ENCODE measurements at regions of chr14 and their contacts with region 1.

Region 1: DNA sequence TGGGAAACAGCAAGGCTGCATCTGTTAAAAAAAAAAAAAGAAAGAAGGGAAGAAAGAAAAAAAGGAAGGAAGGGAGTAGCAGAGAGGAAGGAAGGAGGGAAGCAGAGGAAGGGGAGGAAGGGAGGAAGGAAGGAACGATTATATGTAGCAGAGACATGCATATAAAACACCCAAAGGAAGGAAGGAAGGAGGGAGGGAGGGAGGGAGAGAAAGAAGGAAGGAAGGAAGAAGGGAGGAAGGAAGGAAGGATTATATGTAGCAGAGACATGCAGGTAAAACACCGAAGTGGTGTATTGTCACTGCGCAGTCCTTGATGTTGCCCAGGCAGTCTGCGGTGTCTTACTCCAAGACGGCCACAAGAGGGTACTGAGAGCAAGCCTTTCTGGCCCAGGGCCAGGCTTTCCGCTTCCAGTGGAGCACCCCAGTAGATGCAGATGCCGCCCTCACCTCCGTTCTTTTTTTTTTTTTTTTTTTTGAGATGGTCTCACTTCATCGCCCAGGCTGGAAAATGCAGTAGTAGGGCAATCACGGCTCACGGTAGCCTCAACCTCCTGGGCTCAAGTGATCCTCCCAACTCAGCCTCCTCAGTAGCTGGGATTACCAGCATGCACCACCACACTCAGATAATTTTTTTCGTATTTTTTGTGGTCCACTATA is 5.8 kb upstream of the LBHD2 start:
- ATAC-seq: peak in 7 of 8 experiments; percentile 7 to 62 (median 51)
- H3K4me3 ChIP-seq: no peak overlapping the region
- H3K27ac ChIP-seq: no peak overlapping the region
- H3K4me1 ChIP-seq: peaks cover 0 to 5% of the 10 kb centered on the region in 2 donors

Region 2: DNA sequence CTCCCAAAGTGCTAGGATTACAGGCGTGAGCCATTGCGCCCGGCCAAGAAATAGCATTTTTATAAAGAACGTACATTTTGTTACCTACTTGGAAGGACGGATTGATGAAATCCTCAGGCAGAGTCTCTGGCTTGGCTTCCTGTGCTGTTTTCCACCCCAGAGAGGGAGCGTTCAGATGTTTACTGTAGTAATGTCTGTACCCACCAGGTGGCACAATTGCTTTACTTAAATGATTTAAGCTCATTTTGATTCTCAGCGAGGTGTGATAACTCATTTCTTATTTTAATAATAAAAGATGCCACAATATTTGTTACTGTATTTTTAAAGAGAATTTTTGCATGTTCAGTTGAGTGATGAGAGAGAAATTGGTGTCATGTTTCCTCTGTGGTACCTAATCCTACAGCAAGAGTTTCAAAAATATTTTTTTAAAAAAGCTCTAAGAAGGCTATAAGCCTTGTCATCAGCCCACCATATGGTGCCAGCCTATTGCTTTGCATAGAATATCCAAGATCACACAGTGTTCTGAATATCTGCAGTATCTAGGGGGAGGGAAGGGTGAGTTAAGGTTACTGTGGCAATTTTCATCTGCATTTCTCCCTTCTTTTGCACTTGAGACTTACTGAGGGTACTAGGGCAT is 383.6 kb before region 1 on chr14:
- in situ Hi-C with region 1: no loop called
- ATAC-seq: peak; percentile 41 to 78 (median 58)
- H3K4me3 ChIP-seq: no peak overlapping the region
- H3K27ac ChIP-seq: no peak overlapping the region
- H3K4me1 ChIP-seq: peaks cover 7 to 10% of the 10 kb centered on the region in 2 donors

Region 3: DNA sequence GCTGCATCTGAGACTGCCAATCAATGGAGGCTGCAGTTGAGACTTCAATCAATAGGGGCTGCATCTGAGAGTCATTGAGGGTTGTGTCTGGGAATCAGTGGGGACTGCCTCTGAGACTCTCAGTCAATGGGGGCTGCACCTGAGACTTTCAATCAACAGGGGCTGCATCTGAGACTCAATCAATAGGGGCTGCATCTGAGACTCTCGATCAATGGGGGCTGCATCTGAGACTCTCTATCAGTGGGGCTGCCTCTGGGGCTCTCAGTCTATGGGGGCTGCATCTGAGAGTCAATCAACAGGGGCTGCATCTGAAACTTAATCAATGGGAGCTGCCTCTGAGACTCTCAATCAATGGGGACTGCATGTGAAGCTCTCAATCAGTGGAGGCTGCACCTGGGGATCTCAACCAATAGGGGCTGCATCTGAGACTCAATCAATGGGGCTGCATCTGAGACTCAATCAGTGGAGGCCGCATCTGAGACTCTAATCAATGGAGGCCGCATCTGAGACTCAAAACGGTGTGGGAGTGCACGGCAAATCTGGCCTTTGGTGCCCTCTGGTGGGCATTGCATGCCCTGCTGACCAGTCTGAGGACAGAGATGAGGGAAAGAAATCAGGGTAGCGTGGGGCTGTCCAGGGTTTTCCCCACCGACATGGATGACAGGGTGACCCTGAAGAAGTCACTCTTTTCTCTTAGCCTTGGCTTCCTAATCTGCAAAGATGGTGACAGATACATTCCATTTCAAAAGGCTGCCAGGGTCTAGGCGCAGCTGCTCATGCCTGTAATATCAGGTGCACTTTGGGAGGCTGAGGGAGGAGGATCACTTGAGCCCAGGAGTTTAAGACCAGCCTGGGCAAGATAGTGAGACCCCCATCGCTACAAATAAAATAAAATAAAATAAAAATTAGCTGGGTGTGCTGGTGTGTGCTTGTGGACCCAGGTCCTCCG is 214.5 kb after region 1 on chr14:
- in situ Hi-C with region 1: loop called in 8 of 9 experiments (anchors 10 to 25 kb)
- ATAC-seq: peak; percentile 90 to 99 (median 95)
- H3K4me3 ChIP-seq: no peak overlapping the region
- H3K27ac ChIP-seq: no peak overlapping the region
- H3K4me1 ChIP-seq: no peaks in the 10 kb centered on the region

Measured in motor neuron (in vitro differentiated cells).